ENCODE measurements at regions of chr9 and their contacts with region 1.

Region 1: DNA sequence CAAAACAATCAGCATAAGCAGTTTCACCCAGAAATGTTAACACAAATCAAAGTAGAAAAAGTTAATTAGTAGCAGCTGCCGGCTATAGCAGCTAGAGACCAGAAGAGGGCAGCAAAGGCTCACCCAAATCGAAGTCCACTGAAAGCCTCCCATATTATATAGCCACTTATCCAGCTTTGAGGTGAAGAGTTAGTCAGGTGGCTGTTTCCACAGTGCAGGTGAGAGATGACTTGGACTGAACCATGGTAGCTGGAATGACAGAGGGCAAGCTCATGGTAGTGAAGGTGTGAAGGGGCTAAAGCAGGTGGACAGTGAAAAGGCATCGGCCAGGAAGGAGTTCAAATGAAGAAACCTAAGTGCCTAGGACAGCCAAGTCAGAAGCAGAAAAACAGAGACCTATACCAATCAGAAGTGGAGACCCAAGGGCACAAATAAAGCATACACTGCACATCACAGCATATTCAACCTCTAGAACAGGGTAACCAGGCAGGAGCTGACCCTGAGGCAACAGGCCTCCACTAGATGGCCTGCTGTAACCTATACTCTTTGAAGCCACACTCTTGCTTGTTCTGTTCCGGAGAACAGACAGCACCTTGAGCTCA is 7.2 kb upstream of the RNF38 start:
- DNase-seq: no peak
- H3K4me3 ChIP-seq: no peak overlapping the region
- H3K27me3 ChIP-seq: no peaks in the 10 kb centered on the region
- CTCF ChIP-seq: peak; percentile 90

Region 2: DNA sequence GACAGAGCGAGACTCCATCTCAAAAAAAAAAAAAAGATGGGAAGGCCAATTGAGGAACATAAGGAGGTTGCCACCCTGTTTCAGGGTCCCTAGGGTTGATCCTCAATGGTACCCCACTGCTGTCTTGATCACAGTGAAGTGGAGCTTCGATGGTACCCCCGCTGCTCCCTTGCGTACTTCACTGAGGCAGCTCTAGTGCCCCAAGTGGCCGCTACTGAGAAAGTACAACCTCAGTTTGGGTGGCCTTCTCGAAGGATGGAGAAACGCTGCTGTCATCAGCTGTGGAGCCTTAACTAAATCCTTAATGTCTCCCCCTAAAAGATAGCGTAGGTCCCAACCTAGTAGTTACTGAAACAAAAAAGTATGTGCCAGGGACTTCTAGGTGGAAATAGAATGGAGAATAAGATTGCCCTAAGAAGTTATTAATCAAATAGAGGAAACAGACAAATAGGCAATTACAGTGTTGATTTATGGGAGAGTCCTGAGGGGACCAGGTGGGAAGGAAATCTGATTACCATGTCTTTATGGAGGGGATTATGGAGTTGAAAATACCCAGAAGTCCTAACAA is 795.9 kb before region 1 on chr9:
- CTCF ChIA-PET with region 1: no interaction called
- POLR2A ChIA-PET with region 1: no interaction called
- DNase-seq: no peak
- H3K4me3 ChIP-seq: no peak overlapping the region
- H3K27me3 ChIP-seq: peaks cover 7% of the 10 kb centered on the region
- CTCF ChIP-seq: peak; percentile 82

Region 3: DNA sequence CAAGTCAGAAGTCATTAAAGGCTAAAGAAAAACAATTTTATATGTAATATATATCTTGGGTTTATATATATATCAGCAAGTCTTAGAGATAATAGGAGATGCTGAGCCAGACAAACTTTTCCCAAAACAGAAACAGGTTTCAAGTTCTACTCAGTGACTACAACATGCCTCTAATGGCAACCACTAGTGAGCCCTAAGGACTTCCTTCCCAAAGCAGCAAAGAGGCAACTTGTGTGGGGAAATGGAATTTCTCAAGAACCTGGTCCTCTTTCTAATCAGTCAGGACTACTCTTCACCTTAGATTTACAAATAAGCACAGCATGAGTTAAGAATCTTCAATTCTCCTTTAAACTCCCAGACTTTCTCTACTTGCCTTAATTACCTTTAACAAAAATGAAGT is 24.7 kb before region 1 on chr9:
- CTCF ChIA-PET with region 1: no interaction called
- POLR2A ChIA-PET with region 1: no interaction called
- DNase-seq: no peak
- H3K4me3 ChIP-seq: no peak overlapping the region
- H3K27me3 ChIP-seq: no peaks in the 10 kb centered on the region
- CTCF ChIP-seq: no peak

Region 4: GRCh38 chr9:36436909-36437308 is 29.7 kb after region 1 on chr9:
- CTCF ChIA-PET with region 1: interaction called, 12 read pairs
- POLR2A ChIA-PET with region 1: no interaction called
- DNase-seq: no peak
- H3K4me3 ChIP-seq: no peak overlapping the region
- H3K27me3 ChIP-seq: no peaks in the 10 kb centered on the region
- CTCF ChIP-seq: no peak

Region 5: DNA sequence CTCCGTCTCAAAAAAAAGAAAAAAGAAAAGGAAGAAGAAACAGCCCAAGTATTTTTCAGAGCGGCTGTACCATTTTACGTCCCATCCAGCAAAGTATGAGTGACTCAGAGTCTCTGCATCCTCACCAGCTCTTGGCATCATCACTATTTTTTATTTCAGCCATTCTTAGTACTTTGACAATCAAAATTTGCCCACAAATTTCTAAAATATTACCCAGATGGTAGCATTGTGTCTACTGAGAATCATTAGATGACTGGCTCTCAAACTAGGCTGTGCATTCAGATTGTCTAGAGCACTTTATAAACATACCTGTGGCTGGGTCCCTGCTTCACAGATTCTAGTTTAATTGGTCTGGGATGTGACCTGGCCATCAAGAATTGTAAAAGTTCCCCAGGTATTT is 143.9 kb after region 1 on chr9:
- CTCF ChIA-PET with region 1: interaction called, 93 read pairs
- POLR2A ChIA-PET with region 1: no interaction called
- DNase-seq: peak; percentile 26
- H3K4me3 ChIP-seq: no peak overlapping the region
- H3K27me3 ChIP-seq: no peaks in the 10 kb centered on the region
- CTCF ChIP-seq: no peak

Region 6: GRCh38 chr9:36572515-36573418 is 165.5 kb after region 1 on chr9 and contains the start of gene MELK:
- CTCF ChIA-PET with region 1: interaction called, 11 read pairs
- POLR2A ChIA-PET with region 1: no interaction called
- DNase-seq: no peak
- H3K4me3 ChIP-seq: peak within 1 kb of the TSS; percentile 85
- H3K27me3 ChIP-seq: no peaks in the 10 kb centered on the region
- CTCF ChIP-seq: no peak
- polyA plus RNA-seq, gene MELK: 14.7 and 21.2 TPM in 2 replicates

Measured in BJ (cell line).